ENCODE measurements at regions of chr16 and their contacts with region 1.

Region 1: GRCh38 chr16:88194397-88195268 is 188.1 kb upstream of the ZNF469 start:
- DNase-seq: no peak
- H3K4me3 Mint-ChIP-seq: no peak overlapping the region
- H3K27ac Mint-ChIP-seq: no peak overlapping the region
- H3K4me1 Mint-ChIP-seq: no peaks in the 10 kb centered on the region
- H3K27me3 Mint-ChIP-seq: peaks cover 13% of the 10 kb centered on the region
- CTCF ChIP-seq: no peak

Region 2: GRCh38 chr16:88437373-88437964 is 242.8 kb after region 1 on chr16:
- CTCF ChIA-PET with region 1: interaction called, 26 read pairs
- POLR2A ChIA-PET with region 1: interaction called, 3 read pairs
- intact Hi-C with region 1: loop called (anchors 2 kb)
- DNase-seq: peak; percentile 42
- H3K4me3 Mint-ChIP-seq: no peak overlapping the region
- H3K27ac Mint-ChIP-seq: no peak overlapping the region
- H3K4me1 Mint-ChIP-seq: no peaks in the 10 kb centered on the region
- H3K27me3 Mint-ChIP-seq: peaks cover 11% of the 10 kb centered on the region
- CTCF ChIP-seq: peak; percentile 93

Measured in MCF 10A (cell line).